ENCODE measurements at regions of chr19 and their contacts with region 1.

Region 1: DNA sequence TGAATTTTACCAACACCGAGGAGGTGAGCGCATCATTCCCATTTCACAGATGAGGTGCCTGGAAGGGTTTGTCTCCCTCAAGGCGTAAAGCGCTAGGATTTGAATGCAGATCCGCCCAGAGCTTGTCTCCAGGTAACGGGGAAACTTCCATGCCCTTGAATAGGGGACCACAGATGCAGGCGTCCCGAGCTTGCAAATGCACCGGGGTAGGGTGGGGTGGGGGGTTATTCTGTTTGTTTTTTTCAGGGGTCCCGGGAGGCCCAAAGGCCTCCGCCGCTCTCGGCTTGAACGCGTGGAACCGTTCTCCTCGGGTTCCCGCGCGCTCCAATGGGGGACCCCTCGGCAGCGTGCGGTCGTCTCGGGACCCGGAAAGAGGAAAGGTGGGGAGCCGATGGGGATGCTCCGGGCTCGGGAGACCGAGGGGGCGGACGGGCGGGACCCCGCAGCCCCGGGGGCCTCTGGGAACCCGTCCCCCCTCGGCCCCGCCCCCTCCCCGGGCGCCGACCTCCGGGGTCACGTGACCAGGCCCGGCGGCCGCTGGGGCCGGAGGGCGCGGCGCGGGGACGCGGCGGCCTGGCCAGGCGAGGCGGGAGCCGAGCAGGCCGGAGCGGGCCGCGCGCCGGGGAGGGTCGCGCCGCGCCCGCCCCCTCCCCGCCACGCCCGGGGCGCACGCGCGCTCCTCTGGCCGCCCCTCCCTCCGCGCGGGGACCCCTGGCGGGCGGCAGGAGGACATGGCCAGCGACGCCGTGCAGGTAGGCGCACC is at the start of gene PKN1:
- DNase-seq: peak; percentile 66
- H3K4me3 Mint-ChIP-seq: peak within 1 kb of the TSS; percentile 76
- H3K27ac Mint-ChIP-seq: peak within 1 kb of the TSS; percentile 74
- H3K4me1 Mint-ChIP-seq: peaks cover 32% of the 10 kb centered on the region
- H3K27me3 Mint-ChIP-seq: no peaks in the 10 kb centered on the region
- total RNA-seq, gene PKN1: 188 to 207 TPM

Region 2: GRCh38 chr19:14419106-14419813 is 13.7 kb before region 1 on chr19 and contains the start of gene DDX39A:
- CTCF ChIA-PET with region 1: interaction called, 18 read pairs
- POLR2A ChIA-PET with region 1: interaction called, 3 read pairs
- intact Hi-C with region 1: loop called (anchors 2 kb)
- DNase-seq: peak; percentile 99
- H3K4me3 Mint-ChIP-seq: peak within 1 kb of the TSS; percentile 95
- H3K27ac Mint-ChIP-seq: peak within 1 kb of the TSS; percentile 96
- H3K4me1 Mint-ChIP-seq: peaks cover 29% of the 10 kb centered on the region
- H3K27me3 Mint-ChIP-seq: peaks cover 2% of the 10 kb centered on the region
- total RNA-seq, gene DDX39A: 200 to 204 TPM

Region 3: GRCh38 chr19:14472202-14472938 is 39.4 kb after region 1 on chr19:
- CTCF ChIA-PET with region 1: interaction called, 60 read pairs
- POLR2A ChIA-PET with region 1: interaction called, 3 read pairs
- intact Hi-C with region 1: loop called (anchors 2 kb)
- DNase-seq: peak; percentile 86
- H3K4me3 Mint-ChIP-seq: no peak overlapping the region
- H3K27ac Mint-ChIP-seq: no peak overlapping the region
- H3K4me1 Mint-ChIP-seq: peaks cover 28% of the 10 kb centered on the region
- H3K27me3 Mint-ChIP-seq: peaks cover 18% of the 10 kb centered on the region

Region 4: GRCh38 chr19:14479975-14480699 is 47.2 kb after region 1 on chr19:
- CTCF ChIA-PET with region 1: interaction called, 60 read pairs
- POLR2A ChIA-PET with region 1: interaction called, 3 read pairs
- intact Hi-C with region 1: loop called (anchors 1 kb)
- DNase-seq: peak; percentile 83
- H3K4me3 Mint-ChIP-seq: no peak overlapping the region
- H3K27ac Mint-ChIP-seq: no peak overlapping the region
- H3K4me1 Mint-ChIP-seq: peaks cover 18% of the 10 kb centered on the region
- H3K27me3 Mint-ChIP-seq: peaks cover 2% of the 10 kb centered on the region

Measured in activated CD4-positive, alpha-beta memory T cell treated with anti-CD3 and anti-CD28 coated beads for 36 hours (primary cell).